ENCODE measurements at regions of chr2 and their contacts with region 1.

Region 1: GRCh38 chr2:54522624-54523281 is 66.6 kb downstream of the SPTBN1 start:
- DNase-seq: peak; percentile 79 to 81
- H3K4me3 ChIP-seq: no peak overlapping the region
- H3K27ac ChIP-seq: no peak overlapping the region
- H3K4me1 ChIP-seq: peaks cover 19% of the 10 kb centered on the region
- H3K27me3 ChIP-seq: no peaks in the 10 kb centered on the region
- CTCF ChIP-seq: peak; percentile 90

Region 2: GRCh38 chr2:54115284-54116137 is 407.2 kb before region 1 on chr2 and contains the start of gene ACYP2:
- CTCF ChIA-PET with region 1: interaction called, 6 read pairs
- POLR2A ChIA-PET with region 1: no interaction called
- intact Hi-C with region 1: loop called (anchors 5 kb)
- DNase-seq: peak; percentile 91 to 97
- H3K4me3 ChIP-seq: peak within 1 kb of the TSS; percentile 79
- H3K27ac ChIP-seq: peak within 1 kb of the TSS; percentile 96
- H3K4me1 ChIP-seq: peaks cover 6% of the 10 kb centered on the region
- H3K27me3 ChIP-seq: no peaks in the 10 kb centered on the region
- CTCF ChIP-seq: peak; percentile 55
- total RNA-seq, gene ACYP2: 23.9 and 25.9 TPM in 2 replicates

Region 3: DNA sequence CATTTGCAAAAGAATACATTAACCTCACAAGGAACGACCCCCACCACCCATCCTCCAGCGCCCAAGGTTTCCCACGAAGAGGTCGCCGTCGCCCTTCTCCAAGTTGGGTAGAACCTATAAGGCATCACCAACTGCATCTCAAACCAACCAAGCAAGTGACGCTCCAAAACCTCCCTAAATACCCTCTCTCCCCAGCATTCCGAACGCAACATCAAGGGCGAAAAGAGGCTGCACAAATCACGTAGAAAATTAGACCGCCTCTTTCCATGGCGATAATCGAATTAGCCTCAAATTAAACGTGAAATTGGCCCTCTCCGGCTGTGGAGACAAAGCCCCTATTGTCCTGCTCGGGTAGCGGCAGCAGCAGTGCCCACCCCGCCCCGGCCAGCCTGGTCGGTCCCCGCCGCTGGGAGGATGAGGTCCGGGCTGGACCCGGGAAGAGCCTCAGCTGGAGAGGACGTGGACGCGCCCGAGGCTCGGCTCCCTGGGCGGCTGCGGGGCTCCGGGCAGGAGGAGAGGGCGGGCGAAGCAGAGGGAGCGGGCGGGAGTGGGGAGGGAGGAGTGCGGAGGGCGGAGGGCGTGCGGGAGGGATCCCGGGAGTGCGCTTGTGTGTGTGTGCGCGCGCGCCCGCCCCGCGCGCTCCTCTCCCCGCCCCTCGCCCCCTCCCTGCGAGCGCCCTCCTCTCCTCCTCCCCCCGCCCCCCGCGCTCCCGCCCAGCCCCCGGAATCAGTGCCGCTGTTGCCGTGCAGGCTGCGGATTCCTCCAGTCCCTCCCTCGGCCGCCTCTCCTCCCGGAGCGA is 67.0 kb before region 1 on chr2 and contains the start of gene SPTBN1:
- CTCF ChIA-PET with region 1: interaction called, 3 read pairs
- POLR2A ChIA-PET with region 1: interaction called, 6 read pairs
- intact Hi-C with region 1: loop called (anchors 2 kb)
- DNase-seq: peak; percentile 45 to 86
- H3K4me3 ChIP-seq: peak within 1 kb of the TSS; percentile 68
- H3K27ac ChIP-seq: no peak within 1 kb of the TSS
- H3K4me1 ChIP-seq: peaks cover 28% of the 10 kb centered on the region
- H3K27me3 ChIP-seq: no peaks in the 10 kb centered on the region; the same call in 1 of the 2 replicates
- CTCF ChIP-seq: no peak
- total RNA-seq, gene SPTBN1: 234 and 262 TPM in 2 replicates

Region 4: DNA sequence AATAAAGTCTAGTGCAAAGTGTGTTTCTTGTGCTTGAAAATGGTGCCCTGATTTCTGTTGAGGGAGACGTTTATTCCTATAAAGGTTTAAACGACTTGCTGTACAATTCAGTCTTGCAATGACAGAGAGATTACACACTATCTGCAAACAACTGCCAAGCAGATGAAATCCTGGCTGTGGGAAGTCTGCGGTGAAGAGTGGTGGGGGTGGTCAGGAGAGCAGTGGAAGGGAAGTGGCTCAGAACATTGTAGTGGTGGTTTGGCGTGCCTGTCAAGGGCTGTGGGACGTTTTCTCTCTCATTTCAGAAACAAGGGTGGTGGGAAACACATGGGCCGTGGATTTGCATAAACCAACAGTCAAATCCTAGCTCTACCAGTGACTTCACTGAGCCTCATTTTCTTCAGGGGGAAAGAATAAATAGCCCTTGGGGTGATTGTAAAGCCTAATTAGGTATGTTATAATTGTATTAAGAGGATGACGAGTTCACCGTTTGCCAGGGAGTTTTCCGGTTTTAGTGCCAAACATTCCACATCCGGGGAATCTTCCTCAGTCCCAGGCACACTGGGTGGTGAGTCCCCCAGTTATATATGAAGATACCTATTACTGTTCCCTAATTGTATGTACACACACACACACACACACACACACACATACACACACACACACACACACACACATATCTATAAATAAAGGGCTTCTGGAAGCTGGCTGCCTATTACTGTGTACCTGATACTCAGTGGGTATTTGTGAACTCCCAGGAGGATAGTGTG is 48.4 kb after region 1 on chr2:
- CTCF ChIA-PET with region 1: interaction called, 4 read pairs
- POLR2A ChIA-PET with region 1: interaction called, 21 read pairs
- intact Hi-C with region 1: loop called (anchors 1 kb)
- DNase-seq: peak; percentile 69 to 73
- H3K4me3 ChIP-seq: peak overlapping the region; percentile 33; the same call in 1 of the 2 replicates
- H3K27ac ChIP-seq: peak overlapping the region; percentile 97
- H3K4me1 ChIP-seq: peaks cover 83% of the 10 kb centered on the region
- H3K27me3 ChIP-seq: no peaks in the 10 kb centered on the region
- CTCF ChIP-seq: no peak

Region 5: GRCh38 chr2:54634564-54635511 is 112.1 kb after region 1 on chr2:
- CTCF ChIA-PET with region 1: no interaction called
- POLR2A ChIA-PET with region 1: no interaction called
- intact Hi-C with region 1: loop called (anchors 2 kb)
- DNase-seq: peak in 1 of 2 experiments; percentile 11
- H3K4me3 ChIP-seq: no peak overlapping the region
- H3K27ac ChIP-seq: no peak overlapping the region
- H3K4me1 ChIP-seq: no peaks in the 10 kb centered on the region
- H3K27me3 ChIP-seq: no peaks in the 10 kb centered on the region
- CTCF ChIP-seq: no peak

Region 6: DNA sequence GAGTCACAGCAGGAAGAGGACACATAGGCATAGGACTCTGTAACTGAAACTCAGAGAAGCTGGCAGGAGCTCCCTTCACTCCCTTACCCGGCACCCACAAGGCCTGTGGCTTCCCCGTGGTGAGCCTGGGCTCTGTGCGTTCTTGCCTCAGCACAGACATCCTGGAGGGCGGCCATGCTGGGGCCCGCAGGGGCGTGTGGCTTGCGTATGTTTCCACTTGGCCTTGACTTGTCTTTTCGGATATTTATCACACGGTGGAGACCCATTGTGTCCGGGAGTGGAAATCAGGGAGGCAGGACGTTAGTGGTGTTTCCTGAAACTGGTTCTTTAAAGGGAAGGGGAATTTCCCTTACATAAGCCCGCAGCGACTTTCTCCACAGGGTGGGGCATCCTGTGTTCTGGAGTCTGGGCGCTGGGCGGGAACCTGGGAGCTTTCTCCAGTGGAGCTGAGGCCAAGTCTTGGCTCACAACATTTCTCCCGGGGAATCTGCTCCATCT is 150.8 kb after region 1 on chr2:
- CTCF ChIA-PET with region 1: interaction called, 4 read pairs
- POLR2A ChIA-PET with region 1: interaction called, 4 read pairs
- intact Hi-C with region 1: loop called (anchors 5 kb)
- DNase-seq: peak in 1 of 2 experiments; percentile 60
- H3K4me3 ChIP-seq: no peak overlapping the region
- H3K27ac ChIP-seq: peak overlapping the region; percentile 58
- H3K4me1 ChIP-seq: peaks cover 31% of the 10 kb centered on the region
- H3K27me3 ChIP-seq: no peaks in the 10 kb centered on the region
- CTCF ChIP-seq: no peak

Region 7: GRCh38 chr2:54723131-54723995 is 200.6 kb after region 1 on chr2 and contains the start of gene EML6:
- CTCF ChIA-PET with region 1: interaction called, 4 read pairs
- POLR2A ChIA-PET with region 1: no interaction called
- intact Hi-C with region 1: loop called (anchors 5 kb)
- DNase-seq: peak; percentile 99
- H3K4me3 ChIP-seq: peak within 1 kb of the TSS; percentile 80
- H3K27ac ChIP-seq: peak within 1 kb of the TSS; percentile 56
- H3K4me1 ChIP-seq: peaks cover 33% of the 10 kb centered on the region
- H3K27me3 ChIP-seq: no peaks in the 10 kb centered on the region
- CTCF ChIP-seq: peak; percentile 36; the same call in 1 of the 2 replicates
- total RNA-seq, gene EML6: 3.7 and 6.7 TPM in 2 replicates

Measured in PC-9 (cell line).